Caco-2 (cell line): ENCODE measurements at regions of chr19 and their contacts with region 1.

Region 1: DNA sequence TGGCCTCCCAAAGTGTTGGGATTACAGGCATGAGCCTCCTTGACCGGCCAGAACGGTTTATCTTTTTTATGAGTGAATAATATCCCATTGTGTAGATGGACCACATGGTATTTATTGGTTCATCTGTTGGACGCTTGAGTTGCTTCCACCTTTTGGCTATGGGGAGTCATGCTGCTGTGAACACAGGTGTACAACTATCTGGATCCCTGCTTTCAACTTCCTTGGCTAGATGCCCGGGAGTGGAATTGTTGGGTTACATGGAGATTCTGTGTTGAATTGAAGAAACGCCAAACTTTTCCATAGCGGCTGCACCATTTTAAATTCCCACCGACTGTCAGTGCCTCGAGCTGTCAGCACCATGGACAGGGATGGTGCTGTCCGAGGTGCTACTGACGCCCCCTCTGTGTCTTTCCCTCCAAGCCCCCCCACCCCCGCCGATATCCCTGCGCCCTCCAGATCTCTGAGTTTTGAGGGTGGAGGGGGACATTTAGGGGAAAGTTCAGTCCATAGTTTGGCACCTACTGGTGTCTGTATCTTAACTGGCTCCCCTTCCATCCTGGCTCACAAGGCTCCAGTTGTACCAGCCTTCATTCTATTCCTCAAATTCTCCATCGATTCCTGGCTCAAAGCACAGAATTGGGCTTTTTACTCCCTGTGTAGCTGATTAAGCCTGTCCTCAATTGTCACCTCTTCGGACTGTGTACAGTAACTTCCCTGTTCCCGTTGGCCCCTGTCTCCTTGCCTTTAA is 27.3 kb downstream of the PNPLA6 start:
- DNase-seq: peak in 1 of 2 experiments; percentile 36
- H3K4me3 ChIP-seq: no peak overlapping the region
- H3K4me3 Mint-ChIP-seq: no peak overlapping the region
- H3K27ac Mint-ChIP-seq: no peak overlapping the region
- H3K4me1 ChIP-seq: no peaks in the 10 kb centered on the region
- H3K4me1 Mint-ChIP-seq: no peaks in the 10 kb centered on the region
- H3K27me3 ChIP-seq: no peaks in the 10 kb centered on the region
- H3K27me3 Mint-ChIP-seq: no peaks in the 10 kb centered on the region
- CTCF ChIP-seq: no peak

Region 2: GRCh38 chr19:7145494-7146485 is 417.0 kb before region 1 on chr19:
- CTCF ChIA-PET with region 1: no interaction called
- POLR2A ChIA-PET with region 1: no interaction called
- intact Hi-C with region 1: no loop called
- DNase-seq: no peak
- H3K4me3 ChIP-seq: no peak overlapping the region
- H3K4me3 Mint-ChIP-seq: no peak overlapping the region
- H3K27ac Mint-ChIP-seq: no peak overlapping the region
- H3K4me1 ChIP-seq: no peaks in the 10 kb centered on the region
- H3K4me1 Mint-ChIP-seq: no peaks in the 10 kb centered on the region
- H3K27me3 ChIP-seq: no peaks in the 10 kb centered on the region
- H3K27me3 Mint-ChIP-seq: no peaks in the 10 kb centered on the region
- CTCF ChIP-seq: no peak

Region 3: GRCh38 chr19:7544626-7545025 is 18.2 kb before region 1 on chr19:
- CTCF ChIA-PET with region 1: no interaction called
- POLR2A ChIA-PET with region 1: no interaction called
- intact Hi-C with region 1: no loop called
- DNase-seq: no peak
- H3K4me3 ChIP-seq: no peak overlapping the region
- H3K4me3 Mint-ChIP-seq: no peak overlapping the region
- H3K27ac Mint-ChIP-seq: no peak overlapping the region
- H3K4me1 ChIP-seq: no peaks in the 10 kb centered on the region
- H3K4me1 Mint-ChIP-seq: no peaks in the 10 kb centered on the region
- H3K27me3 ChIP-seq: no peaks in the 10 kb centered on the region
- H3K27me3 Mint-ChIP-seq: no peaks in the 10 kb centered on the region
- CTCF ChIP-seq: no peak

Region 4: GRCh38 chr19:7595466-7596133 is 32.8 kb after region 1 on chr19 and contains the start of gene CAMSAP3:
- CTCF ChIA-PET with region 1: interaction called, 35 read pairs
- POLR2A ChIA-PET with region 1: no interaction called
- intact Hi-C with region 1: no loop called
- DNase-seq: peak; percentile 85 to 90
- H3K4me3 ChIP-seq: peak within 1 kb of the TSS; percentile 75
- H3K4me3 Mint-ChIP-seq: peak within 1 kb of the TSS; percentile 77
- H3K27ac Mint-ChIP-seq: peak within 1 kb of the TSS; percentile 57
- H3K4me1 ChIP-seq: peaks cover 12% of the 10 kb centered on the region
- H3K4me1 Mint-ChIP-seq: peaks cover 13% of the 10 kb centered on the region
- H3K27me3 ChIP-seq: no peaks in the 10 kb centered on the region
- H3K27me3 Mint-ChIP-seq: no peaks in the 10 kb centered on the region
- CTCF ChIP-seq: no peak
- total RNA-seq, gene CAMSAP3: 60.5 and 61.6 TPM in 2 replicates

Region 5: DNA sequence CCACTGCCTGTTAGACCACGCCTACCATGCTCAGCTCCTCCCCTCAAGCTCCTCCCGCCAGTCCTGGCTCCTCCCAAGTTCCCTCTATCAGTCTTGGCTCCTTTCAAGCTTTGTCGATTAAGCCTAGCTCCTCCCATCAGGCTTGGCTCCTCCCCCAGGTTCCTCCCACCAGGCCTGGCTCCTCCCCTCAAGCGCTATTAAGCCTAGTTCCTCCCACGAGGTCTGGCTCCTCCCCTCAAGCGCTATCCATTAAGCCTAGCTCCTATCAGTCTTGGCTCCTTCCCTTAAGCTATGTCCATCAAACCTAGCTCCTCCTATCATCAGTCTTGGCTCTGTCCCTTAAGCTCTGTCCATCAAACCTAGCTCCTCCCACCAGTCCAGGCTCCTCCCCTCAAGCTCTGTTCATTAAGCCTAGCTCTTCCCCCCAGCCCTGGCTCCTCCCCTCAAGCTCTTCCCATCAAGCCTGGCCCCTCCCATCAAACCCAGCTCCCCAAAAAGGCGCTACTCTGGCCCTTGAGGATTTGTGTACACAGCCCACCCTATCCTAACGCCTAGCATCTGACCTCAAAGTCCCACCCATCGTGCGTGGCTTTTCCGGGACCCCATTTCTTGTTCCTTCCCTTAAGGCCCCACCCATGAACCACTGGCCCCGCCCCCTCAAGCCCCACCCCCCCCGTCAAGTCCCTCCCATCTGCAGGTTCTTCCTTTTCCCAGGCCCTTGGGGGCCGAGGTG is 42.8 kb after region 1 on chr19:
- CTCF ChIA-PET with region 1: interaction called, 11 read pairs
- POLR2A ChIA-PET with region 1: no interaction called
- intact Hi-C with region 1: no loop called
- DNase-seq: peak; percentile 60 to 79
- H3K4me3 ChIP-seq: no peak overlapping the region
- H3K4me3 Mint-ChIP-seq: no peak overlapping the region
- H3K27ac Mint-ChIP-seq: no peak overlapping the region
- H3K4me1 ChIP-seq: no peaks in the 10 kb centered on the region
- H3K4me1 Mint-ChIP-seq: no peaks in the 10 kb centered on the region
- H3K27me3 ChIP-seq: no peaks in the 10 kb centered on the region
- H3K27me3 Mint-ChIP-seq: no peaks in the 10 kb centered on the region
- CTCF ChIP-seq: no peak

Region 6: GRCh38 chr19:7629347-7630054 is 66.7 kb after region 1 on chr19 and contains the starts of genes PET100 and XAB2:
- CTCF ChIA-PET with region 1: interaction called, 12 read pairs
- POLR2A ChIA-PET with region 1: no interaction called
- intact Hi-C with region 1: no loop called
- DNase-seq: peak; percentile 94 to 97
- H3K4me3 ChIP-seq: peak within 1 kb of the TSS; percentile 85
- H3K4me3 Mint-ChIP-seq: peak within 1 kb of the TSS; percentile 94
- H3K27ac Mint-ChIP-seq: peak within 1 kb of the TSS; percentile 97
- H3K4me1 ChIP-seq: peaks cover 8% of the 10 kb centered on the region; the same call in 1 of the 2 replicates
- H3K4me1 Mint-ChIP-seq: peaks cover 7% of the 10 kb centered on the region
- H3K27me3 ChIP-seq: no peaks in the 10 kb centered on the region
- H3K27me3 Mint-ChIP-seq: no peaks in the 10 kb centered on the region
- CTCF ChIP-seq: no peak
- total RNA-seq, gene PET100: 138 and 139 TPM in 2 replicates
- total RNA-seq, gene XAB2: 44.7 and 47.9 TPM in 2 replicates

Region 7: DNA sequence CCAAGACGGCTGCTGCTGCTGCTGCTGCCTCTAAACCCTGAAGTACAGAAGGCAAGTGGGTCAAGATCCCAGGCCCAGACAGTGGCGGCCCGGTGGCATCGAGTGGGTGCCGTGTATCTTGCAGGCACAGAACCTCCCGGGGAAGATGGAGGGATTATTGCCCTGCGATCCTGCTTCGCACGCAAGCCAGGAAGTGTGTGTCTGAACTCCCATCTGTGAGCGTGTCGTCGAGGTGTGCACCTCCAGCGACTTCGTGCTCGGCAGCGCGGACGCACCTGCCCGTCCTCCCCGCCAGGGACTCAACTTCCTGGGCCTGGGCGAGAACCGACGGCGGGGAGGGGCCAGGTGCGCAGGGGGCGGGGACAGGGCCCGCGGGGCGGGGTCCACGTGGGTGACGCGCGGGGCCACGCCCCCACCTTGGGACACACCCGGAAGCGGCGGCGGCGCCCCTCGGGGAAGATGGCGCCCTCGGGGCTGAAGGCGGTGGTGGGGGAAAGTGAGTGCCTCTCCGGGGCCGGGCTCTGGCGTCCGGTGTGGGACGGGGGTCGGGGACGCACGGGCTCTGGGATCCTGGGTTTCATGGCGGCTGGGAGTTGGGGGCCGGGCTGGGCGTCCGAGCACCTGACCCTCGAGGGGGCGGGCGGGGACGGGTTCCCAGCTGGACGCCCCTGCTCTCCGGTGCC is 74.0 kb after region 1 on chr19 and contains the start of gene STXBP2:
- CTCF ChIA-PET with region 1: interaction called, 7 read pairs
- POLR2A ChIA-PET with region 1: interaction called, 3 read pairs
- intact Hi-C with region 1: loop called (anchors 2 kb)
- DNase-seq: peak; percentile 88 to 93
- H3K4me3 ChIP-seq: peak within 1 kb of the TSS; percentile 63
- H3K4me3 Mint-ChIP-seq: peak within 1 kb of the TSS; percentile 79
- H3K27ac Mint-ChIP-seq: peak within 1 kb of the TSS; percentile 77
- H3K4me1 ChIP-seq: peaks cover 7% of the 10 kb centered on the region
- H3K4me1 Mint-ChIP-seq: no peaks in the 10 kb centered on the region
- H3K27me3 ChIP-seq: no peaks in the 10 kb centered on the region
- H3K27me3 Mint-ChIP-seq: no peaks in the 10 kb centered on the region
- CTCF ChIP-seq: peak in 1 of 2 experiments; percentile 11
- total RNA-seq, gene STXBP2: 113 and 125 TPM in 2 replicates

Region 8: GRCh38 chr19:7680606-7681339 is 118.0 kb after region 1 on chr19 and contains the start of gene TRAPPC5:
- CTCF ChIA-PET with region 1: interaction called, 34 read pairs
- POLR2A ChIA-PET with region 1: no interaction called
- intact Hi-C with region 1: loop called (anchors 1 kb)
- DNase-seq: peak; percentile 79 to 89
- H3K4me3 ChIP-seq: peak within 1 kb of the TSS; percentile 97
- H3K4me3 Mint-ChIP-seq: peak within 1 kb of the TSS; percentile 82
- H3K27ac Mint-ChIP-seq: peak within 1 kb of the TSS; percentile 77
- H3K4me1 ChIP-seq: peaks cover 13% of the 10 kb centered on the region; the same call in 1 of the 2 replicates
- H3K4me1 Mint-ChIP-seq: peaks cover 8% of the 10 kb centered on the region
- H3K27me3 ChIP-seq: no peaks in the 10 kb centered on the region
- H3K27me3 Mint-ChIP-seq: no peaks in the 10 kb centered on the region
- CTCF ChIP-seq: peak; percentile 32 to 94
- total RNA-seq, gene TRAPPC5: 80.3 and 83.4 TPM in 2 replicates